ENCODE measurements at regions of chr10 and their contacts with region 1.

Region 1: GRCh38 chr10:68720793-68721672 is at the start of gene CCAR1:
- DNase-seq: peak; percentile 96 to 98 (median 97)
- H3K4me3 ChIP-seq: peak within 1 kb of the TSS; percentile 34 to 82 (median 60)
- H3K27ac ChIP-seq: peak within 1 kb of the TSS; percentile 62 to 97 (median 89)
- H3K4me1 ChIP-seq: peaks cover 4 to 18% of the 10 kb centered on the region in 2 donors
- H3K27me3 ChIP-seq: no peaks in the 10 kb centered on the region
- CTCF ChIP-seq: no peak
- POLR2A ChIP-seq: peak; percentile 53 to 90
- total RNA-seq, gene CCAR1: 26.0 to 102 (median 56.9) TPM

Region 2: DNA sequence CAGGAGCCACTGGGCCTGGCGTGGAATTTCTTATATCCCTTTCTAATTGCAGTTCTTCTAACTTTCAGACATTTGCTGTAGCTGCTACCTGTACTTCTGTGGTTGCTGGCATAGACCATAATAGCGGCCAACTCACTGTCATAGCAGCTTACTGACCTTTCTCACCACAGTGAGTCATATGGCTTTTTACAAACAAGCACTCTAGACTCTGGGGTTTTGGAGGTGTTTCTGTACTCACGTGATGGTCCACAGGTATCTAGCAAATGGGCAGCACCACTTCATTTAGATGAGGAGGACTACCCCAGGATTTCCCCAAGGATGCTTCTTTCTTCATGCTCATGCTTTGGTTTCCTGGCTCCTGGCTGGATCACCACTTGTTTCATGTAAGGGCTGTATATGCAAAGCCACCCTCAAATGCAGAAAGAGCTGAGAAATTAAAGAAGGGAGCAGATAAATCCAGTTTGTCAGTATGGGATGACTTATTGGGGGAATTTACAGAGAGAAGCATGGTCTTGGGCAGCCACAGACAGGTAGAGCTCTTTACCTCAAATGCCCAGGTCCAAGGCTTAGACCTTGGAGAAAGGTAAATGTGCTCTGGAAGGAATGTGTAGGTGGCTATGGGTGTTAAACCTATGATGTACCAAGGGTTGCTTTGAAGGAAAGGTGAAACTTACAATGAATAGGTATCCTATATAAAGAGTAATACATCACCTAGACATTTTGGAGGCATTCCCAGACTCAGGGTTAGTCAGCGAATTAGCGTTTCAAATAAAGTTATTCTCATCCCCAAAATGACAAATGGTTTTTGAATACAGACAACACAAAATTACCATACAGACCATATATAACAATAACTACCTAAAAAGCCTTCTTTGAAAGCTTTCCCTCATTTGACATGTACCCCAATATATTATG is 177.8 kb before region 1 on chr10:
- intact Hi-C with region 1: loop called in 1 of 2 experiments (anchors 10 kb)
- DNase-seq: peak in 3 of 7 donors; percentile 18 to 34 (median 30)
- H3K4me3 ChIP-seq: no peak overlapping the region
- H3K27ac ChIP-seq: no peak overlapping the region
- H3K4me1 ChIP-seq: peaks cover 0 to 7% of the 10 kb centered on the region in 2 donors
- H3K27me3 ChIP-seq: no peaks in the 10 kb centered on the region
- CTCF ChIP-seq: no peak
- POLR2A ChIP-seq: no peak

Region 3: DNA sequence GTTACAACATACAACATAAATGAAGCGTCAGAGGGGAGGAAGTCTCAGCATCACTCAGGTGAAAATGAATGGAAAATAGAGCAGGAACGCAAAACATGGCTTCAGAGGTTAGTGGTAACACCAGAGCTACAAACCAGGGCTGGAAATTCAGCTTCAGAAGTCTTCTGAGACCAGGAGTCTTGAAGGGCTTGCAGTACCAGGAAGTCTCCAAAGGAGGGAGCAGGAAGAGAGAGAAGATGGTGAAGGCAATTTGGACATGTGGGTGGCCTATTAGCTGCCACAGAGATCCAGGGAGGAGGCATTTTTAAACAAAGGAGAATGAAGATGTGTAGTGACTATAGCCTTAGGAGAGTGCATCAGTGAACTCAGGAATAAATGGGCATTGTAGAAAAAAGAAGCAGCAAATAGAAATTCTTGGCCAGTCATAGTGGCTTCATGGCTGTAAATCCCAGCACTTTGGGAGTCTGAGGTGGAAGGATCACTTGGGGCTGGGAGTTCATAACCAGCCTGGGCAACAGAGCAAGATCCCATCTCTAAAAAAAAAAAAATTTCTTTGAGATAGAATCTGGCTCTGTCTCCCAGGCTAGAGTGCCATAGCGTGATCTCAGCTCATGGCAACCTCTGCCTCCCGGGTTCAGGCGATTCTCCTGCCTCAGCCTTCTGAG is 170.2 kb before region 1 on chr10:
- intact Hi-C with region 1: loop called (anchors 10 kb)
- DNase-seq: peak; percentile 46 to 77 (median 60)
- H3K4me3 ChIP-seq: no peak overlapping the region
- H3K27ac ChIP-seq: no peak overlapping the region
- H3K4me1 ChIP-seq: no peaks in the 10 kb centered on the region
- H3K27me3 ChIP-seq: no peaks in the 10 kb centered on the region
- CTCF ChIP-seq: peak; percentile 64 to 89 (median 76)
- POLR2A ChIP-seq: no peak

Measured in adrenal gland (tissue), 19 donors.